AG04449 (cell line): ENCODE measurements at regions of chr17 and their contacts with region 1.

Region 1: DNA sequence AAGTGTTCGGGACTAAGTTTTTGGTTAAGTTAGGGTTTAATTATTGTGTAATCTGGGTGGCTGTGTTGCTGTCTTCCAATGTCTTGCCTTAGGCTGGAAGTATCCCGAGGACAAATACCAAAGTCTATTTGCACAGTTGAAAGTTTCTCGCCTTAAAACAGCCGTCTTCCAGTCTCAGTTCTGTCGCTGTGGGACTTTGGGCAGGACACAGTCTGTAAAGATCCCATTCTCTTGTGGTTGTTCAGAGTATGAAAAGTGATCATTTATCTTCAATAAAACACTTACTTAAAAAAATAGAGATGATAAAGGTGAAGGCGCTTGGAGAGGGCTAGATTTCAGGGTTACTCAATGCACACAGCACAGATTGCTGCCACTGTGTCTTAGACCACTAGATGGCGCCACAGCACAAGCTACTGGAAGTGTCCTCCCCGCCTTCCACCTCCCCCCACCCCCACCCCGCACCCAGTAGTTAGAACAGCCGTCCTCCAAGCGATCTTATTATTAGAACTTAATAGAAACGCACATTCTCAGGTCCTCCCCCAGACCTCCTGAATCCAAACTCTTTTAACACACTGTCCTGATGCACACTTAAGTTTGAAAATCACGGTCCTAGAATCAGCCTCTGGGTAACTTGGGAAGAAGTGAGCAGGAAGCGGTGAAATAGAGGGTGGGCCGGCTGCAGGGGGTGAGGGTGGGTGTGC is 45.9 kb downstream of the AKAP1 start:
- DNase-seq: peak; percentile 16
- H3K4me3 ChIP-seq: peak overlapping the region; percentile 44
- CTCF ChIP-seq: peak; percentile 86

Region 2: DNA sequence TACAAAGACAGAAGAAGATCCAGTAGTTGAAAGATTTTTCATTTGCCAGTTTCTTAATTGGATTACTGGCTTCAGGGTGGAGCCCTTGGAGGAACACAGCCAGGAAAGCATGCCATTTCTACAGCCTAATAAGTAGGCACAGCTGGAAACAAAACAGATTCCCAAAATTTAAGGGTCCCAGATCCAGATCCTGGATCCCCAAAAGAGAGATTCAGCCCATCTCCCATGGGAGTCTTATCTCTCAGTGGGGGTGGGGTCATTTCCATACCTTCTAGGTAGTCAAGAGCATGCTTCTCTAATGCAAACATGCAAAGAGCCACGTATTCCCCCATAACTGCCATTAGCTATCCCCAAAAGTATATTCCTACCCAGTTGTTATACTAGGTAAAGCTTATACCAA is 103.1 kb before region 1 on chr17:
- CTCF ChIA-PET with region 1: no interaction called
- POLR2A ChIA-PET with region 1: no interaction called
- DNase-seq: no peak
- H3K4me3 ChIP-seq: no peak overlapping the region
- CTCF ChIP-seq: no peak

Region 3: GRCh38 chr17:57045868-57046704 is 84.8 kb before region 1 on chr17:
- CTCF ChIA-PET with region 1: no interaction called
- POLR2A ChIA-PET with region 1: no interaction called
- DNase-seq: no peak
- H3K4me3 ChIP-seq: peak overlapping the region; percentile 8; the same call in 1 of the 2 replicates
- CTCF ChIP-seq: no peak

Region 4: DNA sequence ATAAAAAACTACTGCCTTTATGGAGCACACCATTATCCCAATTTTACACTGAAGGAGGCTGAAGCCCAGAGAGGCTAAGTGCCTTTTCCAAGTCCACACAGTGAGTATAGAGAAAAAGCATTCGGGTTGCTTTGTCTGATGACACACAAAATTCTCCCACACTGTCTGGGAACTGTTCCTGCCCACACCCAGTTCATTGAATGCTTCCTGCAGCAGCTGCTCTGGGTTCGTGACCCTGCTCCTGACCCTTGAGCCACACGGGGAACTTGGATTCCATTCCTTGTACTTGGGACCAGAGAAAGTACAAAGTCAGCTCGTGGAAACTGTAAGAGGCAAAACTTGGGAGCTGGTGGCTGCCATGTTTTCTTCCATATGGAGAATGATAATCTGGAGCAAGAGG is 12.0 kb after region 1 on chr17:
- CTCF ChIA-PET with region 1: interaction called, 11 read pairs
- POLR2A ChIA-PET with region 1: no interaction called
- DNase-seq: no peak
- H3K4me3 ChIP-seq: no peak overlapping the region
- CTCF ChIP-seq: no peak

Region 5: GRCh38 chr17:57154921-57155320 is 24.0 kb after region 1 on chr17:
- CTCF ChIA-PET with region 1: no interaction called
- POLR2A ChIA-PET with region 1: no interaction called
- DNase-seq: no peak
- H3K4me3 ChIP-seq: no peak overlapping the region
- CTCF ChIP-seq: no peak

Region 6: DNA sequence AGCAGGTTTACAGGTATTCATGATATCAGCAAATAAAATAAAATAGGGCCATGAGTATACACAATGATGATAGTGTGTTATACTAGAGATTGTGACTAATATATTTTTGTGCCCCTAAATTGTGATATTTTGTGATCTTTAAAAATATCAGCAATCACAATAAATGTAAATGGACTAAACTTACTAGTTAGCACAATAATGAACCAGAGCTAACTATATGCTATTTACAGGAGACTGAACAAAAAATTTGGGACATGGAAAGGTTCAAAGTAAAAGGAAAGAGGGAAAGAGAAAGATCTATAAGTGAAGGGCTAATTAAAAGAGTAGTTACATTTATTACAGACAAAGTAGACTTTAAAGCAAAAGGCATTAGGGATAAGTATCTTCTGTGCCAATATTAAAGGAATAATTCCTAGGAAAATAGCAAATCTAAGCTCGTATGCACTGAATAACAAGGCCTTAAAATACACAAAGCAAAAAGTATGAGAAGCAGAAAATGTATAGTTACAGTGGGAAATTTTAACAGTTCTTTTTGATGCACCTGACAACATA is 120.4 kb after region 1 on chr17:
- CTCF ChIA-PET with region 1: no interaction called
- POLR2A ChIA-PET with region 1: no interaction called
- DNase-seq: no peak
- H3K4me3 ChIP-seq: no peak overlapping the region
- CTCF ChIP-seq: no peak

Region 7: GRCh38 chr17:57747221-57748017 is 616.5 kb after region 1 on chr17:
- CTCF ChIA-PET with region 1: interaction called, 12 read pairs
- POLR2A ChIA-PET with region 1: no interaction called
- DNase-seq: peak; percentile 24
- H3K4me3 ChIP-seq: no peak overlapping the region
- CTCF ChIP-seq: peak; percentile 59